ENCODE measurements at regions of chr1 and their contacts with region 1.

Region 1: GRCh38 chr1:46094474-46095005 is 37.9 kb downstream of the PIK3R3 start:
- DNase-seq: peak; percentile 20
- ATAC-seq: no peak
- H3K4me3 ChIP-seq: no peak overlapping the region
- H3K27ac ChIP-seq: no peak overlapping the region
- H3K4me1 ChIP-seq: no peaks in the 10 kb centered on the region
- H3K27me3 ChIP-seq: no peaks in the 10 kb centered on the region
- CTCF ChIP-seq: no peak
- POLR2A ChIP-seq: no peak
- RAD21 ChIP-seq: no peak

Region 2: DNA sequence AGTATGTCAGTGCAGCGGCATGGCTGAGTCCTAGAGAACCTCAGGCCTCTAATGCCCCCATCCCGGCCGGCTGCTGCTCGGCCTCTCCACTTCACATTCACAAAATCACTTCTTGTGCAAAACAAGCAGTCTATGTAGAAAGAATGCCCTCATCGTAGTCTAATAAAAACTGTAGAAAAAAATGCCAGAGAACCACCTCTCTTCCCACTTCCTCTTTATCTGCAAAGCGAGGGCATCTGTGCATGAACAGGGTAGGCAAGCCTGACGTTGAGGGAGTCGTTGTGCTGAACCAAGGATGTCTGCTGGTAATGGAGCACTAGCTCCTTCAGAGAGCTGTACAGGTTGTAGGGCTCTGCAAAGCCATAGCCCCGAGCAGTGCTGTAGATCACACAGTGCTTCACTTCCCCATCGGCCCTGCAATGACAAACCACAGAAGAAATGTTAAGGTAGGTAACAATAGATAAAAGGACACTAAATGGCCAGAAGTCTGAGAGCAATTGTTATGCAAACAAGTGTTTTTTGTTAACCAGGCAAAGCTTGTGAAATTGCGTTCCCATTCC is 51.0 kb before region 1 on chr1:
- CTCF ChIA-PET with region 1: no interaction called
- POLR2A ChIA-PET with region 1: no interaction called
- dilution Hi-C with region 1: no loop called
- in situ Hi-C with region 1: no loop called
- intact Hi-C with region 1: loop called (anchors 10 kb)
- DNase-seq: no peak
- ATAC-seq: no peak
- H3K4me3 ChIP-seq: no peak overlapping the region
- H3K27ac ChIP-seq: no peak overlapping the region
- H3K4me1 ChIP-seq: peaks cover 6% of the 10 kb centered on the region; the same call in 1 of the 2 replicates
- H3K27me3 ChIP-seq: no peaks in the 10 kb centered on the region
- CTCF ChIP-seq: no peak
- POLR2A ChIP-seq: no peak
- RAD21 ChIP-seq: no peak

Measured in IMR-90 (cell line).